CD8-positive, alpha-beta T cell (primary cell): ENCODE measurements at regions of chr7 and their contacts with region 1.

Region 1: GRCh38 chr7:23181684-23182553 is at the start of gene NUP42:
- DNase-seq: peak; percentile 89 to 98 (median 95)
- ATAC-seq: peak; percentile 90
- H3K4me3 ChIP-seq: peak within 1 kb of the TSS; percentile 77 to 84
- H3K4me3 Mint-ChIP-seq: peak within 1 kb of the TSS; percentile 100
- H3K27ac ChIP-seq: peak within 1 kb of the TSS; percentile 86 to 91
- H3K27ac Mint-ChIP-seq: peak within 1 kb of the TSS; percentile 100
- H3K4me1 ChIP-seq: peaks cover 30% of the 10 kb centered on the region
- H3K4me1 Mint-ChIP-seq: peaks cover 39% of the 10 kb centered on the region
- H3K27me3 ChIP-seq: no peaks in the 10 kb centered on the region
- H3K27me3 Mint-ChIP-seq: no peaks in the 10 kb centered on the region
- CTCF ChIP-seq: no peak
- total RNA-seq, gene NUP42: 17.3 to 20.4 TPM

Region 2: DNA sequence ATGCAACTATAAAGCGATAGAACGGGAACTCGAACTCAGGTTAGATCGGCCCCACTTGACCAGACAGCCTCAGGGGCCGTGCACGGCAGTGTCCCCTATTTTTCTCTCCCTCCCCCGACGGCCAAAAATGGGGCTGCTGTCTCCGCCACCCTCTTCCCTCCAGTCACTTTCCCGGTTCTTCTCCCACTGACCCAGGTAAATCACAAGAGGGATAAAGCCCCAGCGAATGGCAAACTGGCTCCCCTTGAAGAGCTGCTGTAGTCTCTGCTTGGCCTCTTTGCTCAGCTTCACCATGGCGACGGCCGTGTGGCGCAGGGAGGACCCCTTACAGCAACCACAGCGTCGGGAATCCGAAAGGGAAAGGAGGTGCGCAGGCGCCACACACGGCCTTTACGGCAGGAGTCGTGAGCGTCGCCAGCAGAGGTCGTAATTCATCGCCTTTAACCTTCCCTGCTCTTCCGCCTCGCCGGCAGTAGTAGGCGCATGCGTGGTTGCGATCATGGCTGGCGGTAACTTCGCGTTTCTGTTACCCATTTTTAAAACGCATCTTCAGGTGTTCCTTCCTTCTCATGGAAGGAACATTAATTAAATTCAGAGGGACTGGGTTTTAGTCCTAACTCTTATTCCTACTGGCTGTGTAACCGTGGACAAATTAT is 359.3 kb before region 1 on chr7 and contains the start of gene TOMM7:
- CTCF ChIA-PET with region 1: no interaction called
- POLR2A ChIA-PET with region 1: no interaction called
- intact Hi-C with region 1: loop called (anchors 1 to 5 kb)
- DNase-seq: peak; percentile 72 to 99 (median 86)
- ATAC-seq: peak; percentile 96
- H3K4me3 ChIP-seq: peak within 1 kb of the TSS; percentile 74 to 89
- H3K4me3 Mint-ChIP-seq: peak within 1 kb of the TSS; percentile 99
- H3K27ac ChIP-seq: peak within 1 kb of the TSS; percentile 85
- H3K27ac Mint-ChIP-seq: peak within 1 kb of the TSS; percentile 99
- H3K4me1 ChIP-seq: peaks cover 20% of the 10 kb centered on the region
- H3K4me1 Mint-ChIP-seq: peaks cover 41% of the 10 kb centered on the region
- H3K27me3 ChIP-seq: no peaks in the 10 kb centered on the region
- H3K27me3 Mint-ChIP-seq: peaks cover 4% of the 10 kb centered on the region
- CTCF ChIP-seq: no peak
- total RNA-seq, gene TOMM7: 595 to 610 TPM

Region 3: GRCh38 chr7:22854158-22855048 is 327.5 kb before region 1 on chr7:
- CTCF ChIA-PET with region 1: no interaction called
- POLR2A ChIA-PET with region 1: no interaction called
- intact Hi-C with region 1: loop called (anchors 1 to 5 kb)
- DNase-seq: peak in 8 of 9 experiments; percentile 58 to 89 (median 76)
- ATAC-seq: peak; percentile 79
- H3K4me3 ChIP-seq: peak overlapping the region; percentile 82 to 94
- H3K4me3 Mint-ChIP-seq: peak overlapping the region; percentile 93
- H3K27ac ChIP-seq: peak overlapping the region; percentile 64 to 81
- H3K27ac Mint-ChIP-seq: peak overlapping the region; percentile 93
- H3K4me1 ChIP-seq: peaks cover 11% of the 10 kb centered on the region
- H3K4me1 Mint-ChIP-seq: peaks cover 23% of the 10 kb centered on the region
- H3K27me3 ChIP-seq: no peaks in the 10 kb centered on the region
- H3K27me3 Mint-ChIP-seq: no peaks in the 10 kb centered on the region
- CTCF ChIP-seq: peak; percentile 65

Region 4: DNA sequence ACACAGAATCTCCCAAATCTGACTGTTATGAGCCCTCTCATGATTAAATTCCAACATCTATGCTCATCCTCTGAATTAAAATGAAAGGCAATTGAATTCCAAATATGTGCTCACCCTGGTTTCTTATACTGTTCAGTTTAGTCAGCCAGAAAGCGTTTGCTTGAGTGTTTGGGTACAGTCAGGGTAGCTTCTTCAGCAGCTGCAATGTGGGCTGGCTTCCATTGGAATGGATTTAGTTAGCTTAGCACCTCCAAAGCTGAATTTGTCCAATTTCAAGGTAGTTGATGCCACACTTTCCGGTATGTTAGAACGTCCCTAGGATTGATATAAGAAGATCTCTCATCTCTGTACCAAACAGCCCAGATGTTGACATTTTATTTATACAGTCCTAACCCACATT is 67.0 kb before region 1 on chr7:
- CTCF ChIA-PET with region 1: no interaction called
- POLR2A ChIA-PET with region 1: no interaction called
- intact Hi-C with region 1: no loop called
- DNase-seq: no peak
- ATAC-seq: no peak
- H3K4me3 ChIP-seq: no peak overlapping the region
- H3K4me3 Mint-ChIP-seq: no peak overlapping the region
- H3K27ac ChIP-seq: no peak overlapping the region
- H3K27ac Mint-ChIP-seq: no peak overlapping the region
- H3K4me1 ChIP-seq: no peaks in the 10 kb centered on the region
- H3K4me1 Mint-ChIP-seq: peaks cover 50% of the 10 kb centered on the region
- H3K27me3 ChIP-seq: no peaks in the 10 kb centered on the region
- H3K27me3 Mint-ChIP-seq: no peaks in the 10 kb centered on the region
- CTCF ChIP-seq: no peak

Region 5: DNA sequence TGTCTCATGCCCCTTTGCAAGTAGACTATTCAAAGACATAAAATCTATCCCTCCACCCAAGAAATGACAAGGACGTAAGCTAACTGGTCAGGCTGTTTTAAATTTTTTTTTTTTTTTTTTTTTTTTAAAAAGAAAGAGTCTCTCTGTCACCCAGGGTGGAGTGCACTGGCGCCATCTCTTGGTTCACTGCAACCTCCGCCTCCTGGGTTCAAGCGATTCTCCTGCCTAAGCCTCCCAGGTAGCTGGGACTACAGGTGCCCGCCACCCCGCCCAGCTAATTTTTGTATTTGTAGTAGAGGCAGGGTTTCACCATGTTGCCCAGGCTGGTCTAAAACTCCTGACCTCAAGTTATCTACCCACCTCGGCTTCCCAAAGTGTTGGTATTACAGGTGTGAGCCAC is 338.7 kb after region 1 on chr7:
- CTCF ChIA-PET with region 1: no interaction called
- POLR2A ChIA-PET with region 1: no interaction called
- intact Hi-C with region 1: loop called in 1 of 2 experiments (anchors 10 kb)
- DNase-seq: peak in 1 of 9 experiments; percentile 37
- ATAC-seq: no peak
- H3K4me3 ChIP-seq: no peak overlapping the region
- H3K4me3 Mint-ChIP-seq: no peak overlapping the region
- H3K27ac ChIP-seq: no peak overlapping the region
- H3K27ac Mint-ChIP-seq: no peak overlapping the region
- H3K4me1 ChIP-seq: peaks cover 23% of the 10 kb centered on the region
- H3K4me1 Mint-ChIP-seq: peaks cover 49% of the 10 kb centered on the region
- H3K27me3 ChIP-seq: no peaks in the 10 kb centered on the region
- H3K27me3 Mint-ChIP-seq: no peaks in the 10 kb centered on the region
- CTCF ChIP-seq: no peak

Region 6: DNA sequence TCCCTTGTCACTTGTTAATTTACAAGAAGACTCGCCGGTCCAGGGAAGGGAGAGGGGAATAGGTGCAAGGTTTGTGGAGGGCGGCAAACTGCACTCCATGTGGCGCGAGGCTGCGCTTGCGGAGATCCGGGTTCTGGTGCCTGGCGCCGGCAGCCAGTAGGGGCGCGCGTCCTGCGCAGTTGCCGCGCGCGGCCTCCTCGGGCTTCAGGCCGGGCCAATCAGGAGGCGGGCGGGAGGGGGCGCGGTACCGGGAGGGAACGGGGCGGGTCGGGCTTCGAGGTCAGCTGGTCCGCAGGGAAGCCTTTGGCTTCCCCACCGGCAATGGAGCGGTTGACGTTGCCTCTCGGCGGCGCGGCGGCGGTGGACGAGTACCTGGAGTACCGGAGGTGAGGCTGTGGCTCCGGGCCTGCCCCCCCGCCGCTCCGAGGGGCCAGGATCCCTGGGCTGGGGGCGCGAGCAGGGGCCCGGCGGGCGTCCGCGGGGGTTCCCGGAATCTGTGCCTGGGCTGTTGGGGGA is 498.0 kb after region 1 on chr7 and contains the start of gene FAM221A:
- CTCF ChIA-PET with region 1: no interaction called
- POLR2A ChIA-PET with region 1: no interaction called
- intact Hi-C with region 1: loop called in 1 of 2 experiments (anchors 10 kb)
- DNase-seq: peak; percentile 55 to 90 (median 80)
- ATAC-seq: peak; percentile 97
- H3K4me3 ChIP-seq: peak within 1 kb of the TSS; percentile 49 to 71
- H3K4me3 Mint-ChIP-seq: peak within 1 kb of the TSS; percentile 96
- H3K27ac ChIP-seq: peak within 1 kb of the TSS; percentile 3 to 18
- H3K27ac Mint-ChIP-seq: peak within 1 kb of the TSS; percentile 79
- H3K4me1 ChIP-seq: peaks cover 3% of the 10 kb centered on the region
- H3K4me1 Mint-ChIP-seq: peaks cover 18% of the 10 kb centered on the region
- H3K27me3 ChIP-seq: no peaks in the 10 kb centered on the region
- H3K27me3 Mint-ChIP-seq: no peaks in the 10 kb centered on the region
- CTCF ChIP-seq: peak; percentile 73
- total RNA-seq, gene FAM221A: 2.4 to 3.0 TPM